K562 (cell line): ENCODE measurements at regions of chr13 and their contacts with region 1.

Region 1: GRCh38 chr13:91739751-91740150 is 341.3 kb downstream of the GPC5 start:
- DNase-seq: no peak
- ATAC-seq: peak; percentile 52
- H3K4me3 ChIP-seq: no peak overlapping the region
- H3K27ac ChIP-seq: no peak overlapping the region
- H3K4me1 ChIP-seq: no peaks in the 10 kb centered on the region
- H3K27me3 ChIP-seq: no peaks in the 10 kb centered on the region
- CTCF ChIP-seq: no peak
- EP300 ChIP-seq: no peak
- POLR2A ChIP-seq: no peak
- RAD21 ChIP-seq: no peak

Region 2: GRCh38 chr13:91185294-91185863 is 554.4 kb before region 1 on chr13:
- CTCF ChIA-PET with region 1: no interaction called
- POLR2A ChIA-PET with region 1: no interaction called
- in situ Hi-C with region 1: no loop called
- intact Hi-C with region 1: no loop called
- DNase-seq: peak in 1 of 4 experiments; percentile 28
- ATAC-seq: peak; percentile 40; the same call in 1 of the 3 replicates
- H3K4me3 ChIP-seq: no peak overlapping the region
- H3K27ac ChIP-seq: no peak overlapping the region
- H3K4me1 ChIP-seq: no peaks in the 10 kb centered on the region
- H3K27me3 ChIP-seq: no peaks in the 10 kb centered on the region
- CTCF ChIP-seq: peak in 2 of 3 experiments; percentile 33 to 50; a peak in 3 of 6 replicates
- EP300 ChIP-seq: no peak
- POLR2A ChIP-seq: no peak
- RAD21 ChIP-seq: peak; percentile 51 to 73

Region 3: DNA sequence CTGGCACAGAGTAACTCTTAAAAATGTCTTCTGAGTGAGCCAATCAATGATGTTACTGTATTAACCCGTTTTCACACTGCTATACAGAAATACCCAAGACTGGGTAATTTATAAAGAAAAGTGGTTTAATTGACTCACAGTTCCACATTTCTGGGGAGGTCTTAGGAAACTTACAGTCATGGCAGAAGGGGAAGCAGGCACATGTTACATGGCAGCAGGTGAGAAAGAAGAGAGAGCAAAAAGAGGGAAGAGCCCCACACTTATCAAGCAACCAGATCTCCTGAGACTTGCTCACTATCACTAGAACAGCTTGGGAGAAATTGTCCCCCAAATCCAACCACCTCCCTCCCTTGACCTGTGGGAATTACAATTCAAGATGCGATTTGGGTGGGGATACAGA is 489.9 kb before region 1 on chr13:
- CTCF ChIA-PET with region 1: no interaction called
- POLR2A ChIA-PET with region 1: no interaction called
- in situ Hi-C with region 1: no loop called
- intact Hi-C with region 1: loop called (anchors 10 kb)
- DNase-seq: no peak
- ATAC-seq: no peak
- H3K4me3 ChIP-seq: no peak overlapping the region
- H3K27ac ChIP-seq: no peak overlapping the region
- H3K4me1 ChIP-seq: no peaks in the 10 kb centered on the region
- H3K27me3 ChIP-seq: no peaks in the 10 kb centered on the region
- CTCF ChIP-seq: no peak
- EP300 ChIP-seq: no peak
- POLR2A ChIP-seq: no peak
- RAD21 ChIP-seq: no peak

Region 4: GRCh38 chr13:92403606-92404005 is 663.9 kb after region 1 on chr13:
- CTCF ChIA-PET with region 1: no interaction called
- POLR2A ChIA-PET with region 1: no interaction called
- in situ Hi-C with region 1: no loop called
- intact Hi-C with region 1: no loop called
- DNase-seq: no peak
- ATAC-seq: no peak
- H3K4me3 ChIP-seq: no peak overlapping the region
- H3K27ac ChIP-seq: no peak overlapping the region
- H3K4me1 ChIP-seq: no peaks in the 10 kb centered on the region
- H3K27me3 ChIP-seq: no peaks in the 10 kb centered on the region
- CTCF ChIP-seq: no peak
- EP300 ChIP-seq: no peak
- POLR2A ChIP-seq: no peak
- RAD21 ChIP-seq: no peak